ENCODE measurements at regions of chr3 and their contacts with region 1.

Region 1: GRCh38 chr3:193805509-193805908 is 212.5 kb downstream of the OPA1 start:
- DNase-seq: peak; percentile 54
- H3K4me3 ChIP-seq: no peak overlapping the region
- H3K27ac ChIP-seq: no peak overlapping the region
- H3K4me1 ChIP-seq: no peaks in the 10 kb centered on the region
- H3K27me3 ChIP-seq: no peaks in the 10 kb centered on the region
- CTCF ChIP-seq: no peak

Region 2: DNA sequence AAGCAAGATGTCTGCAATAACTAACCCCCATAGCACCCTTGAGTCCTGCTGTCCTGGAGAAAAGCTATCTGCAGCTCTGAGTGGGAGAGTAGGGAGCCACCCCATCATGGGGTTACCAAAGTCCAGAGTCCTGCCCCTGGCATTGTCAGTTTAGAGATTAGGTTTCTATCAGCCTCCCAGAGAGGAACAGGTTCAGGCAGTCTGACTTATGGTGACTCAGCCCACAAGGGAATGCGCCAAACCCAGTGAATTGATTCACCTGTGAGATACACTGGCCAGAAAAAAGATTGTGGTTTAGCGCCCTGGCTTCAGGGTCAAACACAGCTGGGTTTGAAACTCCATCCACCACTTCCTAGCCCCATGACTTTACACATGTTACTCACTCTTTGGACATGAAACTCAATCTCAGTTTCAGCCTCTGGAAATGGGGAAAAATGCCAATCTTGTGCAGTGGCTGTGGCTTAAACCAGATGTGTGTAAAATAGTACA is 66.8 kb after region 1 on chr3:
- intact Hi-C with region 1: loop called (anchors 10 kb)
- DNase-seq: peak; percentile 87
- H3K4me3 ChIP-seq: no peak overlapping the region
- H3K27ac ChIP-seq: peak overlapping the region; percentile 58
- H3K4me1 ChIP-seq: no peaks in the 10 kb centered on the region
- H3K27me3 ChIP-seq: no peaks in the 10 kb centered on the region
- CTCF ChIP-seq: no peak

Region 3: DNA sequence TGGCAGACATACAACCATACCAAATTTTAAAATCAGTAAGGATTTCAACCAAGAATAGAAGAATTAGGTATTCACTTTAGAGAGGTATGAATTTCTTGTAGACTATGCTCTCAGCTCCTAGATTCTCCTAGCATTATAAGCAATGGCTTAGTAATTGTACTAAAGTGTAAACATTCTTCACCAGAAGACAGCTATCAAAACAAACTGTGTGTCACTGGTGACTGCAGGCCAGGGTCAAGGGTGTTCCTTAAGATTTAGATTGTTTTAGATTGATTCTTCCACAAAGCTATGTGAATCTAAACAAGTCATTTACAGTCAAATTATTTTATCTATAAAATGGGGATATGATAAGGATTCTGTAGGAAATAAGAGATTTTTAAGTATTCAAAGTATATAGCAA is 616.7 kb after region 1 on chr3:
- intact Hi-C with region 1: no loop called
- DNase-seq: no peak
- H3K4me3 ChIP-seq: no peak overlapping the region
- H3K27ac ChIP-seq: no peak overlapping the region
- H3K4me1 ChIP-seq: no peaks in the 10 kb centered on the region
- H3K27me3 ChIP-seq: no peaks in the 10 kb centered on the region
- CTCF ChIP-seq: no peak

Measured in colonic mucosa (tissue), 4 donors.